OCI-LY7 (cell line): ENCODE measurements at regions of chr21 and their contacts with region 1.

Region 1: DNA sequence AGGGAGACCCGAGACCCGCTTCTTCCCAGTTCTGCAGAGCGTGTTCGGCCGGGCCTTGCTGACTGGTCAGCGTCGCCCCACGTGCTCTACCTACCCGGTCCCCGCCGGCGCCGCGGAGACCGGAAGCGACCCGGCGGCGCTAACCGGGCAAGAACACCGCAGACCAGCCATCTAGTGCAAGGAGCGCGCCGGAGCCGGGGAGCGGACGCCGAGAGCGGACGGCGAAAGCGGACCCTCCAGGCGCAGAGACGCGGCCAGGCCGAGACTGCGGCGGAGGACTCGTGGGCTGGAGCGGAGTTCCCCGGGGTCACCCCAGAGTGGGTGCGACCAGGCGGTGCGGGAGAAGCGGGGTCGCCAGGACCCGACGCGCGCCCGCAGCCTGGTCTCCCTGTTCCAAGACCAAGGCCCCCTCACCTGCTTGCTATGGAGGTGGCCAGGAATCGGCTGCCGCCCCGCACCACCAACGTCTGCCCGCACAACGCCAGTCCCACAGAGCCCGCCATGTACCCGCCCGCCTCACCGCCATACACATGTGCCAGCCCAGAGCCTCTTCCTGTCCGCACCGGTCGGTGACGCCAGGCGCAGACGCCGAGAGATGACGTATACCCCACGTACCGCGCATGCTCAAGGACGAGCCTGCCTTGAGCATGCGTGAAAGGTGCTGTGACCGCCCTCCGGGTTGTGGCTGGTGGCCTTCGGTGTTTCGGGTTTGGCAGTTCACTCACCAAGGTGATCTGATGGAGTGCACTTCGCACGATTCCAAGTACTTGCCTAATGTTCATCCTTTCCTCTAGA is at the start of gene WDR4:
- DNase-seq: peak; percentile 98
- H3K4me3 ChIP-seq: peak within 1 kb of the TSS; percentile 77
- H3K27ac ChIP-seq: peak within 1 kb of the TSS; percentile 65
- H3K4me1 ChIP-seq: peaks cover 20% of the 10 kb centered on the region
- CTCF ChIP-seq: no peak
- total RNA-seq, gene WDR4: 38.1 and 45.7 TPM in 2 replicates

Region 2: DNA sequence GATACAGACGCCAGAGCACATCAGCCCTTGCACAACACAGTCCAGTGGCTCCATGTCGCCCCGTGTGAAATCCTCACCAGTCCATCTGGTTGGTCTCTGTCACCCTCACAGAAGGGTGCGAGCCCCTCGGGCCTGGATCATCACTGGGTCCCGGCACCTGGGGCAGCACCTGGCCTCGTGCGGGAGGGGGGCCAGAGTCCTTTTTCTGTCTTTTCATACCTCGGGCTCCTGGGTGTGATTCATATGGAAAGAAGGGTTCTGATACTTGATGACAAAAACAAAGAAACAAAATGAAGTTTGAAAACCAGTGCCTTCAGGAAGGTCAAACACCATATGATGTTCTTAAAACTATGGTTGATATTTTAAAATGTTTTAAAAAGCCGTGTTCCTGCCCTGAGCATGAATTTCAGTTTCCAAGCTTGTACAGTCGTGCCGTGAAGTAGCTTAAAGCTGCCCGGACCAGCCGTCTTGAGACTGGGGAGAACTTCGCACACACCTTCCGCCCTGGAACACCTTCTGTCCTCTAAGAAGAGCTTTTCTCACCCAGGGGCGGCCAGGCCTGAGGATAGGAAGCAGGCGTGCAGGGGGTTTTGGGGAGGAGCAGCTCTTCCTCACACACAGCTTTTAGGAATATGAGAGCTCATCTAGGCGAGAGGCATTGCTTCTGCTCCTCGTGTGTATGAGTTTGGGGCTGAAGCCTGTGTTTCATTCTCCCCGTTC is 330.3 kb before region 1 on chr21:
- CTCF ChIA-PET with region 1: no interaction called
- POLR2A ChIA-PET with region 1: no interaction called
- intact Hi-C with region 1: no loop called
- DNase-seq: no peak
- H3K4me3 ChIP-seq: no peak overlapping the region
- H3K27ac ChIP-seq: no peak overlapping the region
- H3K4me1 ChIP-seq: peaks cover 9% of the 10 kb centered on the region
- CTCF ChIP-seq: no peak

Region 3: DNA sequence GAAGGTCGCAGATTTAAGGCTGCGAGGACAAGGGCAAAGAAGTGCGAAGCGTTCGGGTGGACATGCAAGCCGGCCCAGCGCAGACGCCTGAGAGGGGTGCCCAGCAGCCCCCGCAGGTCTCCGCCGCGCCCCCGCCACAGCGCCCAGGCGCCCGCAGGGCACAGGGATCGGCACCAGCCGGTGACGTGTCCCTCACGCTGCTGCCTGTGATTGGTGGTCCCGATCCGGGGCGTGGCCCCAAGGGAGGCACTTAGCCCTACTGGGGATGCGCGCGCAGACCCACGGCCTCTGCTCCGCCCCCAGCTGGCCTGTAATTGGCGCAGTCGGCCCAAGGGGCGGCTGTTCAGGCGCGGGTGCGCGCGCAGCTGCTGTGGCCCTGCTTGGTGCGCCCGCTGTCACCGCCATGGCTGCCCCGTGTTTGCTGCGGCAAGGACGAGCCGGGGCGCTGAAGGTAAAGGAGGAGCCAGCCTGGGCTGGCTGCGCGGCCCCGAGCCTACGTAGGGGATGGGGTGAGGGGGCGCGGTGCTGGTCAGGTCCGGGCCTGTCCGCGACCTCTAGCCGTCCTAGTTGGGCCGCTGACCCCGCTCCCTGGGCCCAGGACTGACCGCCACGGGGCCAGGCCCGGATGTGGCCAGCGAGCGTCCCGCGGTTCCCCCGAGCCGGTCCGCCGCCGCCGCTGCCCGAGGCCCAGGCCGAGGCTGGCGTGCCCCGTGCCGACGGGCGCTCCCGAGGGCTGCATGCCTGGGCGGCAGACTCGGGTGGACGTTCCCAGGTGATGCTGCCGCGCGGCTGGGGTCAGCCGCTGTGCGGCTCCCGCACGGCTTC is 14.0 kb after region 1 on chr21 and contains the start of gene NDUFV3:
- CTCF ChIA-PET with region 1: no interaction called
- POLR2A ChIA-PET with region 1: interaction called, 8 read pairs
- intact Hi-C with region 1: loop called (anchors 2 kb)
- DNase-seq: peak; percentile 100
- H3K4me3 ChIP-seq: peak within 1 kb of the TSS; percentile 92
- H3K27ac ChIP-seq: peak within 1 kb of the TSS; percentile 49
- H3K4me1 ChIP-seq: peaks cover 14% of the 10 kb centered on the region
- CTCF ChIP-seq: no peak
- total RNA-seq, gene NDUFV3: 23.1 and 40.8 TPM in 2 replicates